ENCODE measurements at regions of chr2 and their contacts with region 1.

Region 1: GRCh38 chr2:85551698-85552678 is 9.3 kb downstream of the GGCX start:
- DNase-seq: peak; percentile 81 to 94
- ATAC-seq: peak; percentile 91 to 99 (median 95)
- H3K4me3 ChIP-seq: no peak overlapping the region
- H3K4me3 Mint-ChIP-seq: no peak overlapping the region
- H3K27ac ChIP-seq: no peak overlapping the region
- H3K27ac Mint-ChIP-seq: peak overlapping the region in 1 of 2 donors; percentile 29
- H3K4me1 ChIP-seq: no peaks in the 10 kb centered on the region
- H3K4me1 Mint-ChIP-seq: peaks cover 0 to 9% of the 10 kb centered on the region in 2 donors
- H3K27me3 ChIP-seq: no peaks in the 10 kb centered on the region
- H3K27me3 Mint-ChIP-seq: no peaks in the 10 kb centered on the region
- CTCF ChIP-seq: peak; percentile 88

Region 2: DNA sequence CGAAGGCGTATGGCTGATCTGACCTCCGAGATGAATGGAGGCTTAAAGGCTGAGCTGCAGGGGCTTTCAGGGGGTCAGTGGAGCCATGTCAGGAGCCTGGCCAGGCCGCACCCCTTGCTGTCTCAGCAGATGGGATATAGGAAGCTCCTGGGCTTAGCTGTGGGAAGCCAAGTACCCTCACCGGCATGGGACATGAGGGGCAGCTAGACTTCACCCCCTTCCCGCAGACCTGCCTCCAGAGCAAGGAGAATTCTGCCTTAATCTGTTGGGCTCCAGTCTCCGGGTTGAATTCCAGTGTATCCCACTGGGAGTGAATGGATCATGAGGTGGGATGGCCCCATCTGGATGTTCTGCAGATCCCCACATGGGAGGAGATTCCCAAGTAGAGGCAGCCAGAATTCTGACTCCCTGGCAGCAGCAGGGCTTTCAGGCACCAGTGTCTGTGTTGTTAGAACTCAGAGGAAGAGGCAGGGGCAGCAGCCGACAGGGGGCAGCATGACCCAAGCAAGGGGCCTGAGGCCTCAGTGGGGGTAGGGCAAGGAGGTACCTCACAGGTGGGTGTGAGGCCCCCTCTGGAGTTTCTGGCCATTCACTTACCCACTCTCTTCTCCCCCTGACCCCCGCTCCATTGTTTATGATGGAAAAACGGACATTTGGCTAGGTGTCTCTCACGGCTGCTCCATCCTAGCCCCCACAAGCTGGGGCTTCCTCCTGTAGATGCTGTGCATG is 160.9 kb before region 1 on chr2:
- intact Hi-C with region 1: loop called (anchors 1 kb)
- DNase-seq: peak; percentile 64 to 78
- ATAC-seq: peak; percentile 58 to 78 (median 73)
- H3K4me3 ChIP-seq: no peak overlapping the region
- H3K4me3 Mint-ChIP-seq: no peak overlapping the region
- H3K27ac ChIP-seq: peak overlapping the region; percentile 8
- H3K27ac Mint-ChIP-seq: no peak overlapping the region
- H3K4me1 ChIP-seq: peaks cover 14% of the 10 kb centered on the region
- H3K4me1 Mint-ChIP-seq: peaks cover 5 to 14% of the 10 kb centered on the region in 2 donors
- H3K27me3 ChIP-seq: no peaks in the 10 kb centered on the region
- H3K27me3 Mint-ChIP-seq: no peaks in the 10 kb centered on the region
- CTCF ChIP-seq: peak; percentile 66

Region 3: DNA sequence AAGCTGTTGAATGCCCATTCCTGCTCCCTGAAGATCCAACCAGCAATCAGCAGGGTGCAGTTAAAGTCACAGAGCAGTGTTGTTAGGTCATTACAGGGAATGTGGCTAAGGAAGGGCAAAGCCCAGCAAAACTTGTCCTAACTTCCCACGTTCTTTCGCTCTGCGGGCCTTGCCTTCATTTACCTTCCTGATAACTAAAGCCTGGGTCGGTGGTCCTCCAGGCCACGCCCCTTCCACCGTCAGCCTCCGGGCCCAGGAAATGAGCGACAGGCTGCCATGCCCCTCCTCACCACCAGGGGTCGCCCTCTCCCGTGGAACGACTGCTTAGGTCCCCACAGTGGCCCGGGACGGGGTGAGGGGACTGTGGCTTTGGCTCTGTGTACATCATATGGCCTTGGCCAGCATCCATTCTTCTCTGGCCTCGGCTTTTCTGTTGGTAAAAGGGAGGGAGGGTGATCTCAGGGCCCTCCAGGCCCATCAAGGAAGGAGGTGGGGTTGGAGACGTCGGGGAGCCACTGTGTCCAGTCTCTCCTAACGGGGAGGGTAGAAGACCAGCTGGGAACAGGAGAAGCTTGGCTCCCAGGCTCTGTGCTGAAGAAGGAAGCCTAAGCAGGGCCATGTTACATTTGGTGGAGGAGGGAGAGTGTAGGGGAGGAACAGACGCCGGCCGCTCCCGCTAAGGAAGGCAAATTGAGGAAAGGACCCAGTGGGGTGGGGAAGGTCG is 131.3 kb before region 1 on chr2:
- intact Hi-C with region 1: loop called (anchors 1 kb)
- DNase-seq: peak; percentile 89 to 93
- ATAC-seq: peak; percentile 74 to 83 (median 75)
- H3K4me3 ChIP-seq: no peak overlapping the region
- H3K4me3 Mint-ChIP-seq: peak overlapping the region; percentile 79
- H3K27ac ChIP-seq: no peak overlapping the region
- H3K27ac Mint-ChIP-seq: peak overlapping the region; percentile 70 to 76
- H3K4me1 ChIP-seq: peaks cover 35% of the 10 kb centered on the region
- H3K4me1 Mint-ChIP-seq: peaks cover 16 to 31% of the 10 kb centered on the region in 2 donors
- H3K27me3 ChIP-seq: no peaks in the 10 kb centered on the region
- H3K27me3 Mint-ChIP-seq: no peaks in the 10 kb centered on the region
- CTCF ChIP-seq: peak; percentile 100